ENCODE measurements at regions of chr1 and their contacts with region 1.

Region 1: DNA sequence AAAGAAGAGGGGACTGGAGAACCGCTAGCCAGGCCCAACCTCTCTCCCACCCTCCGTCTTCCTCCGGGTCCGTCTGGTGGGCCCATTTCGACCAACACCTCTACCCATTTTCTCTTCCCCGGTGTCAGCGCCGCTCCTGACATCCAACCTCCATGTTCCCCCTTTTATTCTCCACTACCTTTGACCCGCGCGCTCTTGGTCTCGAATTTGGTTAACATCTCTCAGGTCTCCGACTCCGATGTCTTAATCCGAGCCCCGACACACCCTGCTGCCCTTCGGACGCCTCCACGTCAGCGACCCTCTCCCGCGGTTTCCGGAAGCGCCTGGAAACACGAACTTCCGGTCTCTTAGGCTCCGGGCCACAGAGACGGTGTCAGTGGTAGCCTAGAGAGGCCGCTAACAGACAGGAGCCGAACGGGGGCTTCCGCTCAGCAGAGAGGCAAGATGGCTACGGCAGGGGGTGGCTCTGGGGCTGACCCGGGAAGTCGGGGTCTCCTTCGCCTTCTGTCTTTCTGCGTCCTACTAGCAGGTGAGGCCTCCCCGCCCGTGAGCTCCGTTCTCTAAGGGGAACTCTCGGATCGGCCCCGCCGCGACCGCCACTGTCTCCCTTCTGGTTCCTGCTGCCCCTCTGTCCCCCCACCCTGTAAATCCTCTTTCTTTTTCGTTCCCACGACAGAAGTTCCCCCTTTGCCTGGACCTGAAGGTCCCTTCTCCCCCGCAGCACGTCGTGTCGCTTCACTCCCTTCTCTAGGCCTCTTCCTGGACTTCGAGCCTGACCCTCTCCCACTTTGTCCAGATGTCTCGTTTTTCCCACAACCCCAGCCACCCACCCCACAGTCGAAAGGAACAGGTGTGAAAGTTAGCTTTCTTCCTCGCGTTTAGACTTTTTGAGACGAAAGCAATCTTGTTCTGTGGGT is at the starts of genes COPA and NCSTN:
- DNase-seq: peak; percentile 95
- H3K4me3 ChIP-seq: peak within 1 kb of the TSS; percentile 51 to 92 (median 73)
- H3K27ac ChIP-seq: peak within 1 kb of the TSS; percentile 73
- H3K4me1 ChIP-seq: peaks cover 36% of the 10 kb centered on the region
- H3K27me3 ChIP-seq: no peaks in the 10 kb centered on the region
- CTCF ChIP-seq: no peak
- POLR2A ChIP-seq: peak; percentile 92
- total RNA-seq, gene COPA: 167 and 185 TPM in 2 replicates
- total RNA-seq, gene NCSTN: 92.5 and 95.4 TPM in 2 replicates

Region 2: DNA sequence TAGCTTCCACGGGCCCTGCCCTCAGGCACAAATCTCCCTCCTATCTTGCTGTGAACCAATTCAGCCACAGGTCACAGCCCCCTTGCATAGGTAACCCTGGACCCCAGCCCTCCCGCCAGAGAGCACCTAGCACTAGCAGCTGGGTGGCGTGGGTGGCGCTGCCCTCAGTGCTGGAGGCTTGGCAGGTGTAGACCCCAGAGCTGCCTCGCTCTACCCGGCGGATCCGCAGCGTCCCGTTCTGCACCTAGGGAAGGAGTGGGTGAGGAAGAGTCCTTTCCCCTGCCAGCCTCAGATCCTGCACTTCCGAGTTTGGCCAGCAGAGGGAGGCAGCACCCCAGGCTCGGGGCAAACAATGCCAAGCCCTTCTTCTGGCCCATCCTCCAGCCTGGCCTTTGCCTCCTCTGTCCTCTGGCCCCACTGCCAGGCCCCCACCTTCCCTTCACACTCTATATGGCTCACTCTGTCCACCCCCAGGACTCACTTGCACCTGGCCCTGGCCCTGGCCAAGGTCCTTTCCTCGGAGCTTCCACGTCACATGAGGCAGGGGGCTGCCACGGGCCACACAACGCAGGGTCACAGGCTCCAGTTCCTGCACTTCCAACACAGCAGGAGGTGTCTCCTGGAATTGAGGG is 406.8 kb before region 1 on chr1:
- CTCF ChIA-PET with region 1: no interaction called
- POLR2A ChIA-PET with region 1: no interaction called
- dilution Hi-C with region 1: no loop called
- intact Hi-C with region 1: loop called (anchors 2 kb)
- DNase-seq: peak; percentile 47
- H3K4me3 ChIP-seq: no peak overlapping the region
- H3K27ac ChIP-seq: no peak overlapping the region
- H3K4me1 ChIP-seq: no peaks in the 10 kb centered on the region
- H3K27me3 ChIP-seq: peaks cover 0 to 14% of the 10 kb centered on the region in 2 experiments
- CTCF ChIP-seq: peak; percentile 86 to 98
- POLR2A ChIP-seq: no peak

Region 3: GRCh38 chr1:160205242-160206035 is 137.8 kb before region 1 on chr1 and contains the start of gene PEA15:
- CTCF ChIA-PET with region 1: interaction called, 3 read pairs
- POLR2A ChIA-PET with region 1: no interaction called
- dilution Hi-C with region 1: no loop called
- intact Hi-C with region 1: loop called (anchors 5 kb)
- DNase-seq: peak; percentile 54
- H3K4me3 ChIP-seq: peak within 1 kb of the TSS; percentile 55 to 81 (median 72)
- H3K27ac ChIP-seq: peak within 1 kb of the TSS; percentile 73
- H3K4me1 ChIP-seq: peaks cover 45% of the 10 kb centered on the region
- H3K27me3 ChIP-seq: no peaks in the 10 kb centered on the region
- CTCF ChIP-seq: no peak
- POLR2A ChIP-seq: no peak
- total RNA-seq, gene PEA15: 250 and 270 TPM in 2 replicates

Region 4: GRCh38 chr1:160261893-160262794 is 81.1 kb before region 1 on chr1 and contains the start of gene DCAF8:
- CTCF ChIA-PET with region 1: no interaction called
- POLR2A ChIA-PET with region 1: no interaction called
- dilution Hi-C with region 1: no loop called
- intact Hi-C with region 1: loop called (anchors 1 kb)
- DNase-seq: peak; percentile 99
- H3K4me3 ChIP-seq: peak within 1 kb of the TSS; percentile 27 to 87 (median 64)
- H3K27ac ChIP-seq: peak within 1 kb of the TSS; percentile 74
- H3K4me1 ChIP-seq: peaks cover 15% of the 10 kb centered on the region
- H3K27me3 ChIP-seq: no peaks in the 10 kb centered on the region
- CTCF ChIP-seq: no peak
- POLR2A ChIP-seq: peak; percentile 91
- total RNA-seq, gene DCAF8: 99.9 and 106 TPM in 2 replicates

Region 5: DNA sequence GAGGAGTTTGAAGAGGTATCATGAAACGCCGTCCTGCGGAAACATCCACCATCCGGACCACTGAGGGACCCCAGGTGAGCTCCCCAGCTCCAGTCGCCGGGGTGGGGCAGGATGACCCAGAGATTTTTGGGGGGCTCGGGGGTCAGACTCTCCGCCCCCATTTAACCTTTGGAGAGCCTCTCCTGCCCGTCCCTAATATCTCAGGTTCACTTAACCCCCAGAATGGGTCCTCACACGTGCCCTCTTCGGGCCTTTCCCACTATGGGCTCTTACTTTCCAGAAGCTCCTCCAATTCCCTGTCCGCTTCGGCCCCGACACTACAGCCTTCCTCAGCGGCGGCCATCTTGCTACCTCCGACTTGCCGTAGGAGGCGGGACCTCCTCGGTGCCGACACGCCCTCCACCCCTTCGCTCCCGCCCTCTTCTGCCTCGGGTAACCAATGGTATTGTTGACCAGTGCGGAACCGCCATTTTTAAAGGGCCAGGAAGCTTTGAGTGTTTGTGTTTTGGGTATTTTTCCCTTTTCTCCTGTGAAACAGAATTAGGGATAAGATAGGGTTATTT is 58.3 kb before region 1 on chr1 and contains the start of gene PEX19:
- CTCF ChIA-PET with region 1: interaction called, 4 read pairs
- POLR2A ChIA-PET with region 1: no interaction called
- dilution Hi-C with region 1: no loop called
- intact Hi-C with region 1: loop called (anchors 1 kb)
- DNase-seq: peak; percentile 95
- H3K4me3 ChIP-seq: peak within 1 kb of the TSS; percentile 65 to 83 (median 72)
- H3K27ac ChIP-seq: peak within 1 kb of the TSS; percentile 45
- H3K4me1 ChIP-seq: peaks cover 9% of the 10 kb centered on the region
- H3K27me3 ChIP-seq: no peaks in the 10 kb centered on the region
- CTCF ChIP-seq: no peak
- POLR2A ChIP-seq: peak; percentile 87
- total RNA-seq, gene PEX19: 31.5 and 38.4 TPM in 2 replicates

Region 6: GRCh38 chr1:160307118-160307854 is 35.9 kb before region 1 on chr1:
- CTCF ChIA-PET with region 1: no interaction called
- POLR2A ChIA-PET with region 1: no interaction called
- dilution Hi-C with region 1: no loop called
- intact Hi-C with region 1: loop called (anchors 5 kb)
- DNase-seq: no peak
- H3K4me3 ChIP-seq: no peak overlapping the region
- H3K27ac ChIP-seq: no peak overlapping the region
- H3K4me1 ChIP-seq: no peaks in the 10 kb centered on the region
- H3K27me3 ChIP-seq: no peaks in the 10 kb centered on the region
- CTCF ChIP-seq: no peak
- POLR2A ChIP-seq: no peak